ENCODE measurements at regions of chr14 and their contacts with region 1.

Region 1: GRCh38 chr14:52154992-52155650 is 86.3 kb upstream of the NID2 start:
- DNase-seq: no peak
- H3K4me3 ChIP-seq: no peak overlapping the region
- H3K27ac ChIP-seq: no peak overlapping the region
- H3K4me1 ChIP-seq: peaks cover 0 to 7% (median 0%) of the 10 kb centered on the region in 4 donors
- H3K27me3 ChIP-seq: no peaks in the 10 kb centered on the region
- CTCF ChIP-seq: no peak
- EP300 ChIP-seq: no peak
- POLR2A ChIP-seq: no peak

Region 2: GRCh38 chr14:52015411-52016030 is 139.6 kb before region 1 on chr14:
- in situ Hi-C with region 1: no loop called
- intact Hi-C with region 1: no loop called
- DNase-seq: no peak
- H3K4me3 ChIP-seq: no peak overlapping the region
- H3K27ac ChIP-seq: no peak overlapping the region
- H3K4me1 ChIP-seq: peaks cover 8 to 24% (median 20%) of the 10 kb centered on the region in 4 donors
- H3K27me3 ChIP-seq: no peaks in the 10 kb centered on the region
- CTCF ChIP-seq: peak in 2 of 5 experiments; percentile 10 to 25
- EP300 ChIP-seq: no peak
- POLR2A ChIP-seq: no peak

Region 3: DNA sequence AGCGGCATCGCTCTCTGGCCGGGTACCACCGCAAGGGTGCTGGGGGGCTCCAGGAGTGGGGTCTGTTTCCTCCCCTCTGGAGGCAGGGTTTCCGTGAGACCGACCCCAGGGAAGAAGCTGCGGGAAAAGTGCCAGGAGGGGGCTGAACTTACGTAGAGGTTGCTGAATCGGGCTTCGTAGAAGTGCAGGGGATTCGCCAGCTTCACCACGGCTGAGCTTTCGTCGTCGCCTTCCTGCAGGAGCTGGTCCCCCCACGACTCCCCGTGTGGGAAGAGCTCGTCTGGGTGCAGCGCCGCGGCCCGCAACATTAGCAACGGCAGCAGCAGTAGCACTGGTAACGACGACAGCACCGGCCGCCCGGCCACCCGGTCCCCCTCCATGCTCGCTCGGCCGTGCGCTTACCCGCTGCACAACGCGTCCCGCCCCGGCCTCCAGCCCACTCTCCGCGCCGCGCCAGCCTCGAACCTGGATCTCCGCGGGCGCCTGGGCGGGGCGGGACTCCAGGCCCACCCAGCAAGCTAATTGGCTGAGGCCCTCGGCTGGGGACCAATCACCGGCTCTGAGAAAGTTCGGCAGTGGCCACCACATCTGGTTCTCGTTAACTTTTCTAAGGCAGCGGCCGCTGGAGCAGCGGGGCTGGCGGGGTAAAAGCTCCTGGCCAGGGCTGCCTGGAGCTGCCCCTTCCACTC is 86.4 kb before region 1 on chr14 and contains the start of gene NID2:
- in situ Hi-C with region 1: no loop called
- intact Hi-C with region 1: no loop called
- DNase-seq: peak; percentile 82
- H3K4me3 ChIP-seq: peak within 1 kb of the TSS; percentile 52 to 85 (median 62)
- H3K27ac ChIP-seq: peak within 1 kb of the TSS; percentile 76 to 90 (median 81)
- H3K4me1 ChIP-seq: peaks cover 3 to 24% (median 18%) of the 10 kb centered on the region in 4 donors
- H3K27me3 ChIP-seq: peaks cover 16% of the 10 kb centered on the region
- CTCF ChIP-seq: peak in 1 of 5 experiments; percentile 7
- EP300 ChIP-seq: no peak
- POLR2A ChIP-seq: no peak
- total RNA-seq, gene NID2: 8.3 to 62.7 (median 27.4) TPM

Region 4: DNA sequence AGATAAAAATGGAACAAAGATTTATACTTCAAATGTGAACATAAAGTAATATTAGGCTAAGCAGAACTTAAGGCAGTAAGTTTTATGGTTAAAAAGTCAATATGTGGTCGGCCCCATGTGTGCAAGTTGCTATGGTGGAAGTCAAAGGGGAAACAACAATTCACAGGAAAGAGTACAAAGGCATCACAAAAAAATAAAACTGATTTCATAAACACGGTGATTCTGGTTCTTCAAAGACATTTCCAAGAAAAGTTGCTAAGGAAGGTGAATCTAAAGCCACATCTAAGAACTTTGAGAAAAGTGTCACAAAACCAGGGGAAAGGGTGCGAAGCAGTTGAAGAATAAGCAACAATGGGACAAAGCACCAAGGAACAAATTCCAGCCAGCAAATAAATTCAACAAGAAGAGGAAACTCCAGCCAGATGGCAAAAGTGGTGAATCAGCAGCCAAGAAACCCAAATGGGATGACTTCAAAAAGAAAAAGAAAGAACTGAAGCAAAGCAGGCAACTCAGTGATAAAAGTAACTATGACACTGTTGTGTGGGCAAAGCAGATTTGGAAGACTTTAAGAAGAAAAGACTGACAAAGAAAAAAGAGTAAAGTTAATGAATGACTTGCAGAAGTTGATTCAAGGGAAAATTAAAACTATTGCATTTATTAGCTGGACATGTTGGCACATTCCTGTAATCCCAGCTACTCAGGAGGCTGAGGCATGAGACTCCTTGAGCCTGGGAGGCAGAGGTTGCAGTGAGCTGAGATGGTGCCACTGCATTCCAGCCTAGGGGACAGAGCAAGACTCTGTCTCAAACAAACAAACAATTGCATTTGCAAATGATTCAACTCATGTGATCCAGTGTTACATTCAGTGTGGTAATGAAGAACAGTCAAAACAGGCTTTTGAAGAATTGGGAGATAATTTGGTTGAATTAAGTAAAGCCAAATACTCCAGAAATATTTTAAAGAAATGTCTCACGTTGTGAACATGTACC is 131.8 kb after region 1 on chr14:
- in situ Hi-C with region 1: loop called in 1 of 4 experiments (anchors 10 kb)
- intact Hi-C with region 1: no loop called
- DNase-seq: no peak
- H3K4me3 ChIP-seq: no peak overlapping the region
- H3K27ac ChIP-seq: no peak overlapping the region
- H3K4me1 ChIP-seq: peaks cover 0 to 2% (median 0%) of the 10 kb centered on the region in 4 donors
- H3K27me3 ChIP-seq: no peaks in the 10 kb centered on the region
- CTCF ChIP-seq: no peak
- EP300 ChIP-seq: no peak
- POLR2A ChIP-seq: no peak